B cell (primary cell): ENCODE measurements at regions of chr6 and their contacts with region 1.

Region 1: GRCh38 chr6:79777713-79778579 is 146.8 kb downstream of the SH3BGRL2 start:
- DNase-seq: peak; percentile 89
- ATAC-seq: peak; percentile 96
- H3K4me3 ChIP-seq: peak overlapping the region; percentile 11 to 78 (median 55)
- H3K4me3 Mint-ChIP-seq: peak overlapping the region; percentile 81
- H3K27ac ChIP-seq: peak overlapping the region in 1 of 2 donors; percentile 76
- H3K27ac Mint-ChIP-seq: peak overlapping the region; percentile 56
- H3K4me1 ChIP-seq: peaks cover 7 to 11% of the 10 kb centered on the region in 2 donors
- H3K4me1 Mint-ChIP-seq: peaks cover 9% of the 10 kb centered on the region
- H3K27me3 ChIP-seq: no peaks in the 10 kb centered on the region
- H3K27me3 Mint-ChIP-seq: no peaks in the 10 kb centered on the region
- CTCF ChIP-seq: peak; percentile 91

Region 2: DNA sequence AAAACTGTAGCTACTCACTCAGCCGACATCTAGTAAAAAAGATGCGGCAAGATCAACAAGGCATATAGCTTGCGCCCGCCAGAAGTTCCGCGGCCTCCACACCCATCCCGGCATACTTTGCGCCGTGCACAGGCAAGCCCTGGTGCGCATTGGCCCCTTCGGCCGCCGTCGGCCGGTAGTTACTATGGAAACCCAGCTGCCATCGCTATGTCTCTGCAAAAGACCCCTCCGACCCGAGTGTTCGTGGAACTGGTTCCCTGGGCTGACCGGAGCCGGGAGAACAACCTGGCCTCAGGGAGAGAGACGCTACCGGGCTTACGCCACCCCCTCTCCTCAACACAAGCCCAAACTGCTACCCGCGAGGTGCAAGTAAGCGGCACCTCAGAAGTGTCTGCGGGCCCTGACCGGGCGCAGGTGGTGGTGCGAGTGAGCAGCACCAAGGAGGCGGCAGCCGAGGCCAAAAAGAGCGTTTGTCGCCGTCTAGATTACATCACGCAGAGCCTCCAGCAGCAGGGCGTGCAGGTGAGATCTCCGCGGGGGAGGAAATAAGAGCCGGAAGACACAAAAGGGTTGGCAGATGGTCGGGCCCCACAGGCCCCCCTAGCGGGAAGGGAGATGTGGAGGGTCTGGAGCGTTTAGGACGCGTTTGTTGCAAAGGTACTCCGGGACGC is 910.4 kb before region 1 on chr6 and contains the start of gene IRAK1BP1:
- CTCF ChIA-PET with region 1: no interaction called
- POLR2A ChIA-PET with region 1: no interaction called
- intact Hi-C with region 1: loop called (anchors 2 kb)
- DNase-seq: peak; percentile 91
- ATAC-seq: peak; percentile 94
- H3K4me3 ChIP-seq: peak within 1 kb of the TSS; percentile 58 to 94 (median 92)
- H3K4me3 Mint-ChIP-seq: peak within 1 kb of the TSS; percentile 98
- H3K27ac ChIP-seq: peak within 1 kb of the TSS; percentile 69 to 91
- H3K27ac Mint-ChIP-seq: peak within 1 kb of the TSS; percentile 97
- H3K4me1 ChIP-seq: peaks cover 9 to 13% of the 10 kb centered on the region in 2 donors
- H3K4me1 Mint-ChIP-seq: peaks cover 23% of the 10 kb centered on the region
- H3K27me3 ChIP-seq: no peaks in the 10 kb centered on the region
- H3K27me3 Mint-ChIP-seq: no peaks in the 10 kb centered on the region
- CTCF ChIP-seq: peak; percentile 18
- total RNA-seq, gene IRAK1BP1: 3.0 and 3.2 TPM in 2 replicates

Region 3: DNA sequence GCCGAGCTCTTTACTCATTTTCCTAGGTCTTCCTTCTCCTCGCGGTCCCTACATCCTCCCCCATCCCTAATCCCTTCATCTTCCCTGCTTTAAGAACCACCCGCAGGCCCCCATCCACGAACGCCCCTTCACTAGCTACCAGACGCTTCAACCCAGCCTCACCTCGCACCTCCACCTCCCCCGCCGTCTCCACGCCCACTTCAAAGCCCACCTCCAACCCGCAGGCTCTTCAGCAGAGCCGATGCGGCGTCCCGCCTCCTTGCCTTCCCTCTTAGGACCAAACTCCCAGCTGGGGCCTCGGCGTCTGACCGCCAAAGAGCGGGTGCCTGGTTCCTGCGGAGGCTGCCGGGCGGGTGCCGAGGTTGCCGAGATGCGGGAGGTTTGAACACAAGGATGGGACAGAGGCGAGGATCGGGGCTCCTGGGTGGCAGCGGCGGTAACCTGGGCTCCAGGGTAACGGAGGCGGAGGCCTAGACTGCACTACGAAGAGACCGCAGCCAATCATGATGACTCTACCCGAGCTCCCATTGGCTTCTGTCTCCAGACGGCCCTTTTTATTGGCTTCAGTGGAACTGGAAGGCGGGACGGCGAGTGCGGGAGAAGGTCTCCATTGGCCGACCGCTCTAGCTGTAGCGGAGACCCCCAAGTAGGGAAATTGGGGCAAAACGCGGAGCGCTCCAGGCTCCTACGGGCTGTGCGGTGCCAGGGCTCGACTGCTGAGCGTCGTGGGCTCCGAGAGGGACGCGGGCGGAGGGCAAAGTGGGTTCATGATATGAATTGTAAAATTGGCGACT is 240.8 kb before region 1 on chr6 and contains the start of gene LCA5:
- CTCF ChIA-PET with region 1: no interaction called
- POLR2A ChIA-PET with region 1: no interaction called
- intact Hi-C with region 1: loop called (anchors 5 kb)
- DNase-seq: peak; percentile 92
- ATAC-seq: peak; percentile 97
- H3K4me3 ChIP-seq: peak within 1 kb of the TSS; percentile 63 to 92 (median 81)
- H3K4me3 Mint-ChIP-seq: no peak within 1 kb of the TSS
- H3K27ac ChIP-seq: peak within 1 kb of the TSS; percentile 31 to 59
- H3K27ac Mint-ChIP-seq: no peak within 1 kb of the TSS
- H3K4me1 ChIP-seq: peaks cover 12 to 15% of the 10 kb centered on the region in 2 donors
- H3K4me1 Mint-ChIP-seq: no peaks in the 10 kb centered on the region
- H3K27me3 ChIP-seq: peaks cover 0 to 5% (median 0%) of the 10 kb centered on the region in 4 experiments
- H3K27me3 Mint-ChIP-seq: peaks cover 9% of the 10 kb centered on the region
- CTCF ChIP-seq: no peak
- total RNA-seq, gene LCA5: 0.91 and 0.92 TPM in 2 replicates

Region 4: GRCh38 chr6:79869600-79870084 is 91.7 kb after region 1 on chr6:
- CTCF ChIA-PET with region 1: interaction called, 6 read pairs
- POLR2A ChIA-PET with region 1: no interaction called
- intact Hi-C with region 1: loop called (anchors 2 kb)
- DNase-seq: peak; percentile 83
- ATAC-seq: peak; percentile 100
- H3K4me3 ChIP-seq: peak overlapping the region in 3 of 5 experiments; percentile 27 to 52 (median 38)
- H3K4me3 Mint-ChIP-seq: peak overlapping the region; percentile 61
- H3K27ac ChIP-seq: no peak overlapping the region
- H3K27ac Mint-ChIP-seq: peak overlapping the region; percentile 59
- H3K4me1 ChIP-seq: peaks cover 4 to 9% of the 10 kb centered on the region in 2 donors
- H3K4me1 Mint-ChIP-seq: peaks cover 7% of the 10 kb centered on the region
- H3K27me3 ChIP-seq: peaks cover 0 to 8% (median 0%) of the 10 kb centered on the region in 4 experiments
- H3K27me3 Mint-ChIP-seq: peaks cover 4% of the 10 kb centered on the region
- CTCF ChIP-seq: peak; percentile 98

Region 5: GRCh38 chr6:80094017-80094416 is 316.1 kb after region 1 on chr6:
- CTCF ChIA-PET with region 1: no interaction called
- POLR2A ChIA-PET with region 1: no interaction called
- intact Hi-C with region 1: loop called (anchors 5 kb)
- DNase-seq: peak; percentile 41
- ATAC-seq: peak; percentile 41
- H3K4me3 ChIP-seq: no peak overlapping the region
- H3K4me3 Mint-ChIP-seq: no peak overlapping the region
- H3K27ac ChIP-seq: no peak overlapping the region
- H3K27ac Mint-ChIP-seq: no peak overlapping the region
- H3K4me1 ChIP-seq: peaks cover 0 to 3% of the 10 kb centered on the region in 2 donors
- H3K4me1 Mint-ChIP-seq: peaks cover under 1% of the 10 kb centered on the region
- H3K27me3 ChIP-seq: peaks cover 0 to 4% (median 0%) of the 10 kb centered on the region in 4 experiments
- H3K27me3 Mint-ChIP-seq: peaks cover 27% of the 10 kb centered on the region
- CTCF ChIP-seq: peak; percentile 77

Region 6: GRCh38 chr6:80338201-80338836 is 560.4 kb after region 1 on chr6:
- CTCF ChIA-PET with region 1: no interaction called
- POLR2A ChIA-PET with region 1: no interaction called
- intact Hi-C with region 1: loop called (anchors 5 kb)
- DNase-seq: peak; percentile 61
- ATAC-seq: peak; percentile 64
- H3K4me3 ChIP-seq: no peak overlapping the region
- H3K4me3 Mint-ChIP-seq: no peak overlapping the region
- H3K27ac ChIP-seq: no peak overlapping the region
- H3K27ac Mint-ChIP-seq: no peak overlapping the region
- H3K4me1 ChIP-seq: no peaks in the 10 kb centered on the region
- H3K4me1 Mint-ChIP-seq: peaks cover 4% of the 10 kb centered on the region
- H3K27me3 ChIP-seq: no peaks in the 10 kb centered on the region
- H3K27me3 Mint-ChIP-seq: no peaks in the 10 kb centered on the region
- CTCF ChIP-seq: peak; percentile 85